ENCODE measurements at regions of chr1 and their contacts with region 1.

Region 1: DNA sequence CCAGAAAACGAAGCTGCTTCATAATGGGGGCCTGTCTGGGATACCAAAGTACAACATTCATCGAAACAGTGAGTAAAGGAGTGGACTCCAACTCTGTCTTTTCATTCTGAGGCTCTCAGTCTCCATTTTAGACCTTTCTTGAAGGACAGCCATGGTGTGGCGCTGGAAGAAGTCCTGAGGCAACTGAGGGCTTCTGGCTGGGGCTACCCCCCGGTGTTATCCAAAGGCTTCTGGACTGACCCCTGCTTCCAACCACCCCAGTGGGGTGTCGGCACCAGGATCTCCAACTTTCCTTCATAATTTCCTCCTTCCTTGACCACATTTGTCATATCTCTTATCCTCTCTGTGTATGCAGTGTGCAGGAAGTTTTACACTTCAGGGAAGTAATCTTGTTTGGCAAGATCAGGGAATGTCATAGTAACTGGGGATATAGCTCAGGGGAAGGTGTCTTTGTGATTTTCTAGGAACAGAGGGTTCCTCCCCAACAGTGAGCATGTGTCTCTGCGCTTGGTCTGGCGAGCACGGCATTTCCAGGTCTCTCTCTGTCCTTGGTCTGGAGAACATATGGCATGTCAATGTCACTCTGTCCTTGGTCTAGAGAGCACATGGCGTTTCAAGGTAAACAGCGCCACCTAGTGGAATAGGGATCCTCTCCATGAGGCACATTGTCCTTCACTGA is 19.4 kb upstream of the BSDC1 start:
- DNase-seq: peak; percentile 74
- H3K4me3 ChIP-seq: no peak overlapping the region
- H3K27ac ChIP-seq: no peak overlapping the region
- H3K4me1 ChIP-seq: no peaks in the 10 kb centered on the region
- H3K27me3 ChIP-seq: no peaks in the 10 kb centered on the region
- CTCF ChIP-seq: peak; percentile 66 to 77 (median 72)
- EP300 ChIP-seq: no peak
- POLR2A ChIP-seq: no peak

Region 2: GRCh38 chr1:32215629-32216480 is 197.8 kb before region 1 on chr1:
- intact Hi-C with region 1: loop called (anchors 5 kb)
- DNase-seq: no peak
- H3K4me3 ChIP-seq: no peak overlapping the region
- H3K27ac ChIP-seq: peak overlapping the region in 1 of 4 donors; percentile 34
- H3K4me1 ChIP-seq: peaks cover 0 to 8% (median 3%) of the 10 kb centered on the region in 4 donors
- H3K27me3 ChIP-seq: no peaks in the 10 kb centered on the region
- CTCF ChIP-seq: peak; percentile 17 to 58 (median 49)
- EP300 ChIP-seq: no peak
- POLR2A ChIP-seq: no peak

Region 3: DNA sequence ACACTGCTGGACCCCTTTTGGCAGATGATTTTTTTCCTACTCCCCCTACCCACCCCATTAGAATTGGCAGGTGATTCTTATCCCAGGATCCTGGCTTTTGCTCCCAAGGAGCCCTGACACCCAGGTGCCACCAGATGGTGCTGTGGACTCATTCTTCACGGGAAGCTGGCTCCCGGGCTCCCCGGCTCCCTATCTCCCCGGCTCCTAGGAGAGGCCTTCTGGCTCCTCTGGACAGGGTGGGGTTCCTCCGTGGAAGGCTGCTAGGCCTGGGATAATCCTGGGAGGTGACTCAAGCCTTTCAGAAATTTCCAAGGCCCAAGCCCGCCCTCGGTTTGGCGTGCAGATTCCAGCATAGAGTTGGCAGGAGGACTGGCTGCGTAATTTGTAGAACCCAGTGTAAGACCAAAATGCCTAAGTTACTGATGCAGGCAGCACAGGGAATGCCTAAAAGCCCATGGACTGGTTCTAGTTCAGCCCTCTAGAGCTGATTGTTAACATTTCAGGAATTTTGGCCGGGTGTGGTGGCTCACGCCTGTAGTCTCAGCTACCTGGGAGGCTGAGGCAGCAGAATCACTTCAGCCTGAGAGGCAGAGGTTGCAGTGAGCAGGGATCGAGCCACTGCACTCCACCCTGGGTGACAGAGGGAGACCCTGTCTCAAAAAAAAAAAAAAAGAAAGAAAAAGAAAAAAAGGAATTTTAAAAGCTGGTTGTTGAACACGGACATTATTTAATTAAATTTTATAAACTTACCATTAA is 12.6 kb before region 1 on chr1:
- intact Hi-C with region 1: loop called (anchors 2 kb)
- DNase-seq: peak; percentile 94
- H3K4me3 ChIP-seq: no peak overlapping the region
- H3K27ac ChIP-seq: peak overlapping the region; percentile 47 to 79 (median 60)
- H3K4me1 ChIP-seq: peaks cover 0 to 12% (median 6%) of the 10 kb centered on the region in 4 donors
- H3K27me3 ChIP-seq: no peaks in the 10 kb centered on the region
- CTCF ChIP-seq: peak; percentile 78 to 94 (median 80)
- EP300 ChIP-seq: no peak
- POLR2A ChIP-seq: no peak

Region 4: DNA sequence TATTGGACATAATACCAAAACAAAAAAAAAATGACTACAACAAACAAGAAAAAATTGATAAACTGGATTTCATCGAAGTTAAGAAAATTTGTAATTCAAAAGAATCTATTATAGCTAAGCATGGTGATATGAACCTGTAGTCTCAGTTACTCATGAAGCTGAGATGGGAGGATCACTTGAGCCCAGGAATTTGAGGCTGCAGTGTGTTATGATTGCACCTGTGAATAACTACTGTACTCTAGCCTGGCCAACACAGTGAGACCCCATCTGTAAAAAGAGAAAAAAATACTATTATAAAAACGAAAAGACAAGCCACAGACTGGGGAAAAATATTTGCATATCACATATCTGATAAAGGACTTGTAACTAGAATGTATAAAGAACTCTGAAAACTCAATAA is 792.7 kb after region 1 on chr1:
- intact Hi-C with region 1: no loop called
- DNase-seq: no peak
- H3K4me3 ChIP-seq: no peak overlapping the region
- H3K27ac ChIP-seq: no peak overlapping the region
- H3K4me1 ChIP-seq: no peaks in the 10 kb centered on the region
- H3K27me3 ChIP-seq: no peaks in the 10 kb centered on the region
- CTCF ChIP-seq: no peak
- EP300 ChIP-seq: no peak
- POLR2A ChIP-seq: no peak